ENCODE measurements at regions of chr2 and their contacts with region 1.

Region 1: GRCh38 chr2:96138179-96139145 is at the start of gene ASTL:
- DNase-seq: peak; percentile 75
- H3K4me3 Mint-ChIP-seq: no peak within 1 kb of the TSS
- H3K27ac Mint-ChIP-seq: peak within 1 kb of the TSS; percentile 23
- H3K4me1 Mint-ChIP-seq: peaks cover 32% of the 10 kb centered on the region
- H3K27me3 Mint-ChIP-seq: no peaks in the 10 kb centered on the region
- total RNA-seq, gene ASTL: 1.8 to 2.4 TPM

Region 2: GRCh38 chr2:96024336-96025193 is 113.9 kb before region 1 on chr2:
- CTCF ChIA-PET with region 1: interaction called, 13 read pairs
- POLR2A ChIA-PET with region 1: no interaction called
- intact Hi-C with region 1: no loop called
- DNase-seq: no peak
- H3K4me3 Mint-ChIP-seq: no peak overlapping the region
- H3K27ac Mint-ChIP-seq: no peak overlapping the region
- H3K4me1 Mint-ChIP-seq: peaks cover 2% of the 10 kb centered on the region
- H3K27me3 Mint-ChIP-seq: no peaks in the 10 kb centered on the region

Region 3: DNA sequence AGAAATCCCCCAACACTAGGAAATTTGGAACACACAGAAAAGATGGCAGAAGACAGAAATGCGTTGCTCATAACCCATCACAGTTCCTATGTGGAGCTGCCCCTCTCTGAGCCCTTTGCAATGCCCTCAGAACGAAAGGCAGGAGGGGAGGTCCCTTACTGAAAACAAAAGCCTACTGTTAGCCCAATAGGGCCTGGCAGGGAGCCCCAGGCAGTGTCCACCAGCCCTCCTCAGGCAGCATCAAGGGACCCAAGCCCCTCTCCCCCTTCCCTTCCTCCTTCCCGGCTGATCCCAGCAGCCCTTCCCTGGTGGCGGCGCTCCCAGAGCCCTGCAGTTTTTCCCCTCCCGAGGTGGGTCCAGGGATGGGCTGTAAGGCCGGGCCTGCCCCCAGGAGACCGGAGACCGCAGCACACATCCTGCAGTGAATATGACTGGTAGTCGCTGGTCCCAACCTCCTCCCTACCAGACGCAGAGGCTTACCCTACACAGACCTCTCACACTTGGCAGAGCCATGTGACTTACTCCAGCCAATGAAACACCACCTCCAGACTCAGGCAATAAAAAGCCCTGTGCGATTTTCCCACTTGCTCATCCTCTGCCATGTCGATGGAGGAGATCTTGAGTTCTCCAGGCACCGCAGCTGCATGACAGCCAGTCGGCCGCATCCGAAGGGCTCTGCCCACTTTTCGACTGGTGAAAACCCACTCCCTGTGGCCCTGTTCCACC is 26.2 kb after region 1 on chr2:
- CTCF ChIA-PET with region 1: interaction called, 80 read pairs
- POLR2A ChIA-PET with region 1: interaction called, 206 read pairs
- intact Hi-C with region 1: no loop called
- DNase-seq: peak; percentile 90
- H3K4me3 Mint-ChIP-seq: peak overlapping the region; percentile 87
- H3K27ac Mint-ChIP-seq: peak overlapping the region; percentile 100
- H3K4me1 Mint-ChIP-seq: peaks cover 72% of the 10 kb centered on the region
- H3K27me3 Mint-ChIP-seq: no peaks in the 10 kb centered on the region

Region 4: GRCh38 chr2:96180521-96180920 is 42.1 kb after region 1 on chr2:
- CTCF ChIA-PET with region 1: interaction called, 474 read pairs
- POLR2A ChIA-PET with region 1: interaction called, 61 read pairs
- intact Hi-C with region 1: no loop called
- DNase-seq: no peak
- H3K4me3 Mint-ChIP-seq: no peak overlapping the region
- H3K27ac Mint-ChIP-seq: no peak overlapping the region
- H3K4me1 Mint-ChIP-seq: peaks cover 2% of the 10 kb centered on the region
- H3K27me3 Mint-ChIP-seq: no peaks in the 10 kb centered on the region

Region 5: DNA sequence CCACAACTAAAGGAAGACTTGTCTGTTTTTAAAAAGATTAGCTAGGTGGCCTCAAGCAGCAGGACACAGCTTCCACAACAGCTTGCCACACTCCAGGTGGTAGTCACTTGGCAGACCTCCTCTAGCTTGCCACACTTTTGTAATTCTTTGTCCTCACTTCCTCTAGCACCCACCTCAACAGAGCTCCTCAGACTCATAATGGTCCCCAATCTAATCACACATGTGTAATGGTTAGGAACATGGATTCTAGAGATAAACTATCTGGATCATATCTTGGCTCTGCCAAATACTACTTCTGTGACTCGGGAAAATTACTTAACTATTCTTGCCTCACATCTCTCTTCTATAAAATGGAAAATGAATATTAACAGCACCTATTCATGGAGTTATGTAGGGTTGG is 163.4 kb after region 1 on chr2:
- CTCF ChIA-PET with region 1: no interaction called
- POLR2A ChIA-PET with region 1: no interaction called
- intact Hi-C with region 1: no loop called
- DNase-seq: no peak
- H3K4me3 Mint-ChIP-seq: no peak overlapping the region
- H3K27ac Mint-ChIP-seq: peak overlapping the region; percentile 28
- H3K4me1 Mint-ChIP-seq: peaks cover 45% of the 10 kb centered on the region
- H3K27me3 Mint-ChIP-seq: no peaks in the 10 kb centered on the region

Region 6: DNA sequence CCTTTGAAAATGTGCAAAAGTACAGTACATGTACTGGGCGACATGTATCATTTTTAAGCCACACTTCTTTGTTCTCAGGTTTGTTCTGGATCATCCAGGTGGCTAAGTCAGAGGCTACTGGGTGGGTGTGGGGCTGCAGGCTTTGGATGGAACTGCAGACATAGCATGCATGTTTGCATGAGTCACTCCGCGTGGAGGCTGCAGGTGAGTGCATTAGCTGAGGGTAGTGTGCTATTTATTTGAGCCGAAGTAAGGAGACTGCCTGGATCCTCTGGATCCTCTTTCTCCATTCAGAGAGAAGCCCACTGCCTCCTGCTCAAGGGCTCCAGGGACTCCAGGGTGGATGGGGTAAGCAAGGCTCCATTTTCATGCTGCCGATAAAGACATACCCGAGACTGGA is 376.1 kb after region 1 on chr2:
- CTCF ChIA-PET with region 1: no interaction called
- POLR2A ChIA-PET with region 1: no interaction called
- intact Hi-C with region 1: no loop called
- DNase-seq: peak; percentile 8
- H3K4me3 Mint-ChIP-seq: no peak overlapping the region
- H3K27ac Mint-ChIP-seq: no peak overlapping the region
- H3K4me1 Mint-ChIP-seq: peaks cover 15% of the 10 kb centered on the region
- H3K27me3 Mint-ChIP-seq: no peaks in the 10 kb centered on the region